Activated naive CD8-positive, alpha-beta T cell treated with anti-CD3 and anti-CD28 coated beads, Interleukin-2, amount 10 ng/mL, durations not matched to agents 7 days and 5 days (primary cell): ENCODE measurements at regions of chr1 and their contacts with region 1.

Region 1: GRCh38 chr1:236603991-236604904 is at the start of gene HEATR1:
- DNase-seq: peak; percentile 87
- ATAC-seq: peak; percentile 91
- H3K4me3 Mint-ChIP-seq: peak within 1 kb of the TSS; percentile 99
- H3K27ac Mint-ChIP-seq: peak within 1 kb of the TSS; percentile 88
- H3K4me1 Mint-ChIP-seq: peaks cover 24% of the 10 kb centered on the region
- H3K27me3 Mint-ChIP-seq: peaks cover 14% of the 10 kb centered on the region
- total RNA-seq, gene HEATR1: 40.1 to 40.5 TPM

Region 2: GRCh38 chr1:236795035-236795756 is 190.9 kb after region 1 on chr1 and contains the start of gene MTR:
- POLR2A ChIA-PET with region 1: interaction called, 11 read pairs
- DNase-seq: peak; percentile 94
- ATAC-seq: peak; percentile 96
- H3K4me3 Mint-ChIP-seq: peak within 1 kb of the TSS; percentile 92
- H3K27ac Mint-ChIP-seq: peak within 1 kb of the TSS; percentile 97
- H3K4me1 Mint-ChIP-seq: peaks cover 26% of the 10 kb centered on the region
- H3K27me3 Mint-ChIP-seq: peaks cover 9% of the 10 kb centered on the region
- total RNA-seq, gene MTR: 61.0 to 62.7 TPM